AG04449 (cell line): ENCODE measurements at regions of chr17 and their contacts with region 1.

Region 1: DNA sequence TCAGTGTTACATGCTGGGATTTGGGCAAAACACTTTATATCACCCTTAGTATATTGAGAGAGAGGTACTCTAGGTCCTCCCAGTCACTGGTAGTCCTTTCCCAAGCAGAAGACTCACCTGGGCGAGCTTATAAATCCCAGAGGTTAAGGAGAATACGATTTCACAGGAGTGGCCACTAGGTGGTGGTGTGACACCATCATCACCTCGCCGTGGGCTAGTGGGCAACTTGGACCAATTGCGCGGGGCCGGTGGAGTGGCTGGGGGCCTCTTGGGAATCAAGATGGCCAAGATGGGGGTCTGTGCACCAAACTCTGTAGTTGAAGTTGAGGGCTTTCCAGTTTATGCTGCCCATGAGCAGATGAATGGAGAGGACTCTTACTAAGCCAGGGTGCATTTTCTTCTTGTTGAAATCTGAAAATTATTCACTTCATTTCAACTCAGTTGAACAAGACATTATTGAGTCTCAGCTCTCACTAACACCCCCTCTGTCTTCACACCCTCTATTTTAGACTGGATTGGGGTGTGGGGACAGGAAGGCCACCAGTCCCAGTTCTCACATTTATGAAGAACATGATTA is 38.2 kb upstream of the PIRT start:
- DNase-seq: no peak
- H3K4me3 ChIP-seq: no peak overlapping the region
- CTCF ChIP-seq: peak; percentile 48

Region 2: DNA sequence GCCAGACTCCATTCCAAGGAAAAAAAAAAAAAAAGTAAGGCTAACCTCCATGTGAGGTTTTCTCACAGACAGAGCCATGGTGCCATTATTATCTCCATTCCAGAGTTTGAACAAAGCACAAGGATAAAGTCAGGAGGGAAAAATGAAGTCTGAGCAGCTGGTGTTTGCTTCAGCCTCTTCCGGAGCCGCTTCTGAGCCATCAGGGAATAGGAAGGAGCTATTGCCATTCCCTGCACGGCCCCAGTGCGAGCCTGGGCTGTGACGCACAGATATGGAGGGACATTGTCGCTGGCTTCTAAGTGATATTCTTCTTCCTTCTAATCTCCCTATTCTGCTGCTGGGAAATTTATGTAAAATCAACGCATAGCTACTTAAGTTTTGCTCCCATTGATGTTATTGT is 31.3 kb after region 1 on chr17:
- CTCF ChIA-PET with region 1: no interaction called
- POLR2A ChIA-PET with region 1: no interaction called
- DNase-seq: no peak
- H3K4me3 ChIP-seq: no peak overlapping the region
- CTCF ChIP-seq: no peak

Region 3: DNA sequence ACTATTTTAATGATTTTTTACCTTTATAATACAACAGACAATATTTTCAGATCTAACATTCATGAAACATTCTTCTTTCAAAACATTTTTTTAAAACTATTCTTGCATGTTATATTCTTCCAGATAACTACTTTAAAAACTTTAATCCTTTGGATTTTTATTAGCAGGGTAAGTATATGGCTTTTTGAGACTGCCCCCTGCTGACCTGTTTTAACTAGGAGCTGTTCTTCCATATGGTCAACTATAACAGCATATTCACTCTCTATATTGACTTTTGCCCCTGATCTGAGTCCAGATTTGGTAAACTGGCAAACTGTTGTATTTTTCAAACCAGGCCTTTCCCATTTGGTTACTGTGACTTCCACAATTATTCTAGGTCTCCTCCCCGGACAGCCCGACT is 1104.7 kb after region 1 on chr17:
- CTCF ChIA-PET with region 1: interaction called, 37 read pairs
- POLR2A ChIA-PET with region 1: no interaction called
- DNase-seq: no peak
- H3K4me3 ChIP-seq: no peak overlapping the region
- CTCF ChIP-seq: peak; percentile 11

Region 4: DNA sequence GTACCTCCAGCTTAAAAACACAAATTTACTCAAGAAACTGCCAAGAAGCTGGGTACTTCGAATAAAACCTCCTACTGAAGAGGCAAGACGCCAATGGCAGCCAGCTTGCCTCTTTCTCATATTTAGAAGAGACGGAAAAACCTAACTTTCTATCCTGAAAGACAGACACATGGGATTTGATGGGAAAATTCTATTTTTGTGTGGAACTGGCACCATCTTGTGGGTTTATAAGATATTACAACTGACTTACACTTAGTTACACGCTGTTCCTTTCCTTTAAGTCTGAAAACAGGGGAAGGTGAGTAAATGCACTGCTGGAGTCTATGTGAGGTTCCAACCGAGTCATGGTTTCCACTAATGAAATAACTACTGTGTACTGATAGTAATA is 1110.9 kb after region 1 on chr17:
- CTCF ChIA-PET with region 1: interaction called, 37 read pairs
- POLR2A ChIA-PET with region 1: no interaction called
- DNase-seq: no peak
- H3K4me3 ChIP-seq: no peak overlapping the region
- CTCF ChIP-seq: peak; percentile 20